ENCODE measurements at regions of chr15 and their contacts with region 1.

Region 1: GRCh38 chr15:80326270-80326669 is 74.3 kb upstream of the CTXND1 start:
- DNase-seq: no peak
- H3K4me3 ChIP-seq: no peak overlapping the region
- H3K27ac ChIP-seq: no peak overlapping the region
- H3K4me1 ChIP-seq: no peaks in the 10 kb centered on the region
- H3K27me3 ChIP-seq: no peaks in the 10 kb centered on the region
- CTCF ChIP-seq: no peak

Region 2: DNA sequence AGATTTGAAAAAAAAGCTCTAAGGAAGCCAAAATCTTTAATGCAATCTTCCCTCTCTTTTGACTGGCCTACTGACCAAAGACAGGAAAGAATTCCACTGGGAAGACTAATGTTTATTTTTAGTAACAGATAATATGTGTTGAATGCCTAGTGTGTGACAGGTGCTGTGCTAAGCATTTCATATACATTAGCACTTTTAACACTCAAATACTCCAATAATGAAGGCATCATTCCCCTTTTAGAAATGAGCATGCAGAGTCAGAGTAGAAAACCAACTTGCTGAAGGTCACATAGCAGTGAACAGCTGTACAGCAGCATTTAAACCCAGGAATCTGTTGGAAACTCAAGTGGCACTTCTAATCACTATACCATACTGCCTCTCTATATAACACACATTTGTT is 723.5 kb before region 1 on chr15:
- CTCF ChIA-PET with region 1: no interaction called
- POLR2A ChIA-PET with region 1: no interaction called
- intact Hi-C with region 1: no loop called
- DNase-seq: no peak
- H3K4me3 ChIP-seq: no peak overlapping the region
- H3K27ac ChIP-seq: no peak overlapping the region
- H3K4me1 ChIP-seq: no peaks in the 10 kb centered on the region
- H3K27me3 ChIP-seq: peaks cover 22% of the 10 kb centered on the region
- CTCF ChIP-seq: no peak

Region 3: DNA sequence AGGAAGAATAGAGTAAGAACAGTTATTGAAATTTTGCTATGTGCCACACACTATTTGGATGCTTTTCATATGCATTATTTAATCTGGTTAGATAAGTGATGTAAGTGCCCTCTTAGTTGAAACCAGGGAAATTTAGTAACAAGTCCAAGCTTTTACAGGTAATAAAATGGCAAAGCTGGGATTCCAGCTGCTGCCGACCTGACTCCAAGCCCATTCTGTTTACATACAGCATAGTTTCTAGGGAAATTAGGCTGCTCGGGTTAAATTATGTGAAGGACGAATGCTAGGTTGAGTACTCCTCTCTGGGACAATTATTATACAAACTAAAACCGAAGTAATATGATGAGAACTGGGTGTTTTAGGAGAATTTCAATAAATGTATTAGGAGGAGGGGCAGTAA is 212.2 kb before region 1 on chr15:
- CTCF ChIA-PET with region 1: no interaction called
- POLR2A ChIA-PET with region 1: no interaction called
- intact Hi-C with region 1: no loop called
- DNase-seq: no peak
- H3K4me3 ChIP-seq: no peak overlapping the region
- H3K27ac ChIP-seq: peak overlapping the region; percentile 10
- H3K4me1 ChIP-seq: no peaks in the 10 kb centered on the region
- H3K27me3 ChIP-seq: no peaks in the 10 kb centered on the region
- CTCF ChIP-seq: no peak

Region 4: DNA sequence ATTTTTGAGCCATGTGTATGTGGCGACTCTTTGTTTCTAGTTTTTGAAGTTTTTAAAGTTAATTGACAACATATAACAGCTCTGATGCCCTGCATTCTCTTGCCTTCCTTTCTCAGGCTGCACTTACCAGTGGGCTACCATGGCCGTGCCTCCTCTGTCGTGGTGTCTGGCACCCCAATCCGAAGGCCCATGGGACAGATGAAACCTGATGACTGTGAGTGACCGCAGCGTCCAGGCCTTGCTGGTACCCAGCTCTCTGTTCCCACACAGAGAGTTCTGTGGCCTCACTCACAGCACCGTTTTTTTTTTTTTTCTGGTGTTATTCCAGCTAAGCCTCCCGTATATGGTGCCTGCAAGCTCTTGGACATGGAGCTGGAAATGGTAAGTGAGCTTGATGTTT is 158.3 kb before region 1 on chr15:
- CTCF ChIA-PET with region 1: no interaction called
- POLR2A ChIA-PET with region 1: interaction called, 13 read pairs
- intact Hi-C with region 1: no loop called
- DNase-seq: no peak
- H3K4me3 ChIP-seq: no peak overlapping the region
- H3K27ac ChIP-seq: no peak overlapping the region
- H3K4me1 ChIP-seq: no peaks in the 10 kb centered on the region
- H3K27me3 ChIP-seq: no peaks in the 10 kb centered on the region
- CTCF ChIP-seq: no peak